Activated naive CD4-positive, alpha-beta T cell treated with anti-CD3 and anti-CD28 coated beads for 36 hours (primary cell): ENCODE measurements at regions of chr4 and their contacts with region 1.

Region 1: GRCh38 chr4:159077702-159078495 is 25.0 kb upstream of the RAPGEF2 start:
- DNase-seq: no peak
- H3K4me3 Mint-ChIP-seq: no peak overlapping the region
- H3K27ac Mint-ChIP-seq: peak overlapping the region; percentile 34
- H3K4me1 Mint-ChIP-seq: peaks cover 28% of the 10 kb centered on the region
- H3K27me3 Mint-ChIP-seq: no peaks in the 10 kb centered on the region

Region 2: DNA sequence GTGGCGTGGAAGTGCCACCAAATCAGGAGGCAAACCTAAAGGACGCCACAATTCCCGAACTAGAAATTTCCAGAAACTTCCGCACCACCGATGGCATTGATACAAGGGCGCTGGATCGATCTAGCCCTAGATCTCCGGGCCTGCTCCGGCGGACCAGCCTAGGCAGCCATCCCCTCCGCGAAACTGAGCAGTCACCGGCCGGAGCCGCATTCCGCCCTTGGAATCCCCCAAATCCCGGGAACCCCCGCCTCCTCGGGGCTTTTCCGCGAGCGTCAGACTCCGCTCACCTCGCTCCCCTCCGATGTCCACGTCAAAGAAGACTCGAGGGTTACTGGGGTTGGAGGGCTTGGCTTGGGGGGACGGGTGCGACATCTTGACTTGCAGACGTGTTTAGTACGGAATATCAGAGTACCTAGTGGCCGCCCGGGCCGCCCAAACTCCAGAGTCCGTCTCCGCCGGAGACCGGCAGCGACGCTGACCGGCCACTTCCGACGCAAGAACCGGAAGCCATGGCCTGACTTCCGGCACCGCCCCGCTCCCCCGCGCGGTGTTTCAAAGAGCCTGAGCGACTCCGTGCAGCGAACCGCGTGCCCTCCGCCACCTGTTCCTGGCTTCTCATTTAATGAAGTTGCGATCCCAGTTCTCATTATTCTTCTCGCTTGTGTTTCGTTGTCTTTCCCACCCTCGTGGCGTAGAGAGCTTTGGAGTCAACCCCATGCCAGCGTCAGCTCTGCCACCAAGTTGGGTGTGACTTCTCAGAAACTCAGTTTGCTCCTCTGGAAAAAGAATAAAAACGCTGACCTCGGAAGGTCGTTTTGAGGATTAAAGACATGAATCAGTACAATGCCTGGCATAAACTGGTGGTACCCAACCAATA is 354.7 kb before region 1 on chr4 and contains the start of gene PPID:
- CTCF ChIA-PET with region 1: no interaction called
- intact Hi-C with region 1: loop called (anchors 1 kb)
- DNase-seq: peak; percentile 88
- H3K4me3 Mint-ChIP-seq: peak within 1 kb of the TSS; percentile 98
- H3K27ac Mint-ChIP-seq: peak within 1 kb of the TSS; percentile 99
- H3K4me1 Mint-ChIP-seq: peaks cover 41% of the 10 kb centered on the region
- H3K27me3 Mint-ChIP-seq: no peaks in the 10 kb centered on the region
- total RNA-seq, gene PPID: 55.4 to 55.6 TPM

Region 3: DNA sequence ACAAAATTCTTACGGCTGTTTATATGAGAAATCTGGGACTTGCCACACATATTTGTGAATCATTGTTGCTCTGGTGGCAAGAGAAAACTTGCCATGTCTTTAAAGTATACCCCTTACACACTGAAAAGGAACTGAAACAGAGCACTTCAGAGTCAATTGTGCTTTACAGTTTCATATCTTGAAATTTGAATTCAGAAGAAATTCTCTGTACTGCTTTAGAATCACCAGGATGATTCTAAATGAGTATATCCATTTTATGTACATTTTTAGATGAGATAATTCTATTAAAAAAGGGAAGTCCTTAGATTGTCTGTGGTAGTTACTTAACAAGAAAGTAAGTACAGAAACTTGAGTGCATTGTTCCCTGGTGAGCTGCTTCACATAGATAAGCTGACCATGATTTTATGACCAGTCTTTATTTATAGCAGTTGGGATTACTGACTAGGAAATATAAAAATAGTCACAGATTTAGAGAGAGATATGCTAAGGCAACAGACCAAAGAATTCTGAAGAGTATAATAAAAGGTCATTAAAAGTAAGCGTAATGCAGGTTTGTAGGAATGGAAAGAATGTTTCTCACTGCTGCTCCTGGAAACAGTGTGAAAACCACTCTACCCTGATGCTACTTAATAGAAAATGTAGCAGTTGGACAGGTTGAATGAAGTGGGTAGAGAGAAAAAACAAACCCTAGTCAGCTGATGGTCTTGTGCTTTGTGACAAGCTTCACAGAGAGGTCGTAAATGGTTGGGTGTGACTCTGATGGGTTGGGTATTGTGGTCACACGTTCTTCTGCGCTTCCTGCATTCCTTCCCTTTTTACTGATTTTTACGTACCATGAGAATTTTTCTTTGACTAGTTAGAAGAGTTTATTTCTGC is 268.1 kb before region 1 on chr4:
- CTCF ChIA-PET with region 1: no interaction called
- intact Hi-C with region 1: loop called (anchors 2 kb)
- DNase-seq: peak; percentile 18
- H3K4me3 Mint-ChIP-seq: peak overlapping the region; percentile 46
- H3K27ac Mint-ChIP-seq: peak overlapping the region; percentile 42
- H3K4me1 Mint-ChIP-seq: peaks cover 40% of the 10 kb centered on the region
- H3K27me3 Mint-ChIP-seq: no peaks in the 10 kb centered on the region

Region 4: GRCh38 chr4:159051245-159052071 is 26.4 kb before region 1 on chr4:
- CTCF ChIA-PET with region 1: no interaction called
- intact Hi-C with region 1: loop called (anchors 2 kb)
- DNase-seq: no peak
- H3K4me3 Mint-ChIP-seq: no peak overlapping the region
- H3K27ac Mint-ChIP-seq: no peak overlapping the region
- H3K4me1 Mint-ChIP-seq: peaks cover 15% of the 10 kb centered on the region
- H3K27me3 Mint-ChIP-seq: peaks cover 13% of the 10 kb centered on the region

Region 5: DNA sequence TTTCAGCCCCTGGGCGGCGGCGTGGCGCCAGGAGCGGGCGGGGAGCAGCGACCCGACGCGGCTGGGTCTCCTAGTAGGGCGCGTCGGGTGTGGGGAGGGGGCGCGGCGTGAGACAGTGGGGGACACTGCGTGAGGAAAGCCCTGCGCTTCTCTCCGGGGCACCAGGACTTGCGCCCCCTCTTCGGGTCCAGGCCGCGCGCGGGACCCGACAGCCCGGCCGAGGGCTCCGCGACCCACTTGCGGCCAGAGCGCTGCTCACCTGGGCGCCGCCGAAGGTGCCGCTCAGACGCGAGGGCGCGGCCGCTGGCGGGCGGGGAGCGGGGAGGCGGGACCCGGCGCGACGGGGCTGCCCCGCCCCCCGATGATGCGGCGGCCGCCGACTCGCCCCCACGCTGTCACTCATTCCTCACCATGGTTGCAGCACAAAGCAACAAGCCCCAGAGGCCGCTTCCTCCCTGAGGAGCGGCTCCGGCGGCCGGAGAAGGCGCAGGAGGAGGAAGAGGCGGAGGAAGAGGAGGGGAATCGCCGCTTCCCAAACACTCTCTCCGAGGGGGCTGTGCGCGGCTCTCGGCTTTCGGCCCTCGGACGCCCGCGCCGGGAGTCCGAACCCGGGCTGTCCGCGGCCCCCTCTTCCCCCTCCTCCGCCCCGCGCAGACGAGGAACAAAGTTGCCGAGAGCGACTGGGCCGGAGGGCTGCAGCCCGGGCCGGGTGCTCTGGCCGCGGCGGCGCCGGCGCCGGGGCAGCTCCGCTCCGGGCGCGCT is 24.9 kb after region 1 on chr4 and contains the start of gene RAPGEF2:
- CTCF ChIA-PET with region 1: no interaction called
- intact Hi-C with region 1: loop called (anchors 1 kb)
- DNase-seq: peak; percentile 91
- H3K4me3 Mint-ChIP-seq: peak within 1 kb of the TSS; percentile 80
- H3K27ac Mint-ChIP-seq: peak within 1 kb of the TSS; percentile 88
- H3K4me1 Mint-ChIP-seq: peaks cover 47% of the 10 kb centered on the region
- H3K27me3 Mint-ChIP-seq: no peaks in the 10 kb centered on the region
- total RNA-seq, gene RAPGEF2: 21.2 to 26.1 TPM